ENCODE measurements at regions of chr1 and their contacts with region 1.

Region 1: GRCh38 chr1:184242507-184242943 is 144.3 kb upstream of the C1orf21 start:
- DNase-seq: peak in 2 of 6 donors; percentile 16 to 29
- ATAC-seq: peak; percentile 79 to 93 (median 92)
- H3K4me3 ChIP-seq: no peak overlapping the region
- H3K27ac ChIP-seq: peak overlapping the region in 1 of 4 donors; percentile 17
- H3K4me1 ChIP-seq: peaks cover 0 to 5% (median 0%) of the 10 kb centered on the region in 3 donors
- H3K27me3 ChIP-seq: no peaks in the 10 kb centered on the region
- CTCF ChIP-seq: no peak

Region 2: DNA sequence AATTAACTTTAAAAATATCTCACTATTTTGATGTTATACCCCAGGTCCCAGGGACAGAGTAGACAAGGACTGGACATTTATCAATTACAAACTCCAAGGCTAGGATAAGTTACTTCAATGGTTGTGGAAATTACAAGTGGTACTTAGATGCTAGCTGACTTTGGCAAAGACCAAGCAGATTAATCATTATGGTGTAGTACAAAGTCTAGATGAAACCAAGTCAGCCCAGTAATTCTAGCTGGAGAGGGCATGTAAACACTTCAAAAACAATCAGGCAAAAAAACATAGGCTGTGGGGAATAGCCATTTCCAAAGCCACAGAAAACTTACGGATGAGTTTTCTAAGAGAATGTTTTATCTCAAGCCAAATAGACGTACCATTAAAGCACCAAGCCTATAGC is 66.5 kb before region 1 on chr1:
- intact Hi-C with region 1: no loop called
- DNase-seq: no peak
- ATAC-seq: no peak
- H3K4me3 ChIP-seq: no peak overlapping the region
- H3K27ac ChIP-seq: no peak overlapping the region
- H3K4me1 ChIP-seq: no peaks in the 10 kb centered on the region
- H3K27me3 ChIP-seq: no peaks in the 10 kb centered on the region
- CTCF ChIP-seq: no peak

Region 3: GRCh38 chr1:184563308-184563707 is 320.8 kb after region 1 on chr1:
- intact Hi-C with region 1: loop called in 1 of 3 experiments (anchors 10 kb)
- DNase-seq: no peak
- ATAC-seq: peak in 3 of 4 donors; percentile 57 to 80 (median 79)
- H3K4me3 ChIP-seq: no peak overlapping the region
- H3K27ac ChIP-seq: no peak overlapping the region
- H3K4me1 ChIP-seq: peaks cover 0 to 9% (median 8%) of the 10 kb centered on the region in 3 donors
- H3K27me3 ChIP-seq: no peaks in the 10 kb centered on the region
- CTCF ChIP-seq: peak in 2 of 4 donors; percentile 8 to 18